ENCODE measurements at regions of chr11 and their contacts with region 1.

Region 1: DNA sequence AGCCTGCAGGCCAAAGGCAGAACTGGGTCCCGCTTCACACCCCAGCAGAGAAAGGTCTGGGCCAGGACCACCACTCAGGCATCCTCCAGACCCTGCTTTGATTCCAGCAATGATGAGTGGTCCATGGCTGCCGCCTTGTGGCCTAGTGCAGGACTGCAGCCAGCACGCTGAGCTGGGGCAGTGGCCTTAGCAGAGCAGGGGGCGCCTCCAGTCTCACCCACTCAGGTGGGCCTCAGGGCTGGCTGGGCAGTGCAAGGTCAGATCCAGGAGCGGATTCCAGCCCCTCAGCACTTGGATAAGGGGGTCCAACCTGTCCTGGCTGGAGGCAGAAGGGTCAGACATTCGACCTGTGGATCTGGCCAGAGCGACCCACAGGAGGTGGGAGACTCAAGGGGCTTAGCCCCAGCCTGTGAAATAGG is 9.6 kb upstream of the PDE2A start:
- DNase-seq: no peak
- H3K4me3 ChIP-seq: no peak overlapping the region
- H3K27me3 ChIP-seq: no peaks in the 10 kb centered on the region; the same call in 1 of the 2 replicates
- CTCF ChIP-seq: peak; percentile 94

Region 2: GRCh38 chr11:72561856-72562255 is 121.9 kb before region 1 on chr11:
- CTCF ChIA-PET with region 1: no interaction called
- POLR2A ChIA-PET with region 1: no interaction called
- DNase-seq: no peak
- H3K4me3 ChIP-seq: no peak overlapping the region
- H3K27me3 ChIP-seq: peaks cover 4% of the 10 kb centered on the region
- CTCF ChIP-seq: no peak

Region 3: DNA sequence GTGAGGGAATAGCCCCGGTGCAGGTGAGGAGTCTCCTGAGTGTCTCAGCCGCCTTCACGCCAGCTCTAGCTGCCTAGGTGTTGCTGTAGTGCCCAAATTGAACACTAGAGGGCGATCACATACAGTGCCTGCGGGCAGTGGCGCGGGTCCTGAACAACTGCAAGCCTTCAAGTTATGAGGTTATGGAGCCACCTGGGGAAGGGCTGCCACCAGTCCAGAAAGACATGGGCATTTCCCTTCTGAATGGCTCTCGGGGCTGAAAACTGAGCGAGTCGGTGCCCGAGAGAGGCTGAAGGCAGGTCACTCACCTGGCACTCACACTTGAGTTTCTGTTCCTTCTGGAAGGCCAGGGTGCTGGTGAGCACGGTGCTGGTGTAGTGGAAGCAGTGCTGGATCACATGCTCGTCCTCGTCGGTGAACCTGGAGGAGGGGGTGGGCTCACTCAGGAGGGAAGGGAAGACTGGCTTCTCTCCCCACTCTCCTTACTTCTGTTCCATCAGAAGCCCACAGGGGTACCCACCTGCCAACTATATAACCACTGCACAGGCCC is 98.0 kb before region 1 on chr11:
- CTCF ChIA-PET with region 1: interaction called, 57 read pairs
- POLR2A ChIA-PET with region 1: no interaction called
- DNase-seq: no peak
- H3K4me3 ChIP-seq: no peak overlapping the region
- H3K27me3 ChIP-seq: peaks cover 45% of the 10 kb centered on the region
- CTCF ChIP-seq: peak; percentile 87

Region 4: GRCh38 chr11:72598906-72599305 is 84.9 kb before region 1 on chr11:
- CTCF ChIA-PET with region 1: interaction called, 14 read pairs
- POLR2A ChIA-PET with region 1: no interaction called
- DNase-seq: no peak
- H3K4me3 ChIP-seq: no peak overlapping the region
- H3K27me3 ChIP-seq: peaks cover 28% of the 10 kb centered on the region
- CTCF ChIP-seq: peak; percentile 54

Region 5: DNA sequence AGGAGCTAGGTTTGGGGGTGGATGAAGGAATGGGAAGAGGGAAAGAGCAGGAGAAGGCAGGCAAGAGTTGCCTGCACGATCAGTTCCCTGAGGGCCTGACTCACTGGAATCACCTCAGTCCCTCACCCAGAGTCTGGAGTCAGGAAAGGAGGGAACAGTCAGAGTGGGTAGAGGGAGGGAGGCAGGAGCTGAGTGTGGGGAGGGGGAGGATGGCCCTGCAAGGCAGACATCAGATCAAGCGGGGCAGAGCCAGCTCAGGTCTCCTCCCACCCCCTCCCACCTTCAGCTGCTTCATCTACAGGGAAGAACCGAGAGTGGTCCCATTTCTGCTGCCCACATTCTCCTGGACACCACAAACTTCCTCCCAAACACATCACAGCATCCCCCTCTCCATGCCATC is 68.5 kb before region 1 on chr11:
- CTCF ChIA-PET with region 1: no interaction called
- POLR2A ChIA-PET with region 1: no interaction called
- DNase-seq: no peak
- H3K4me3 ChIP-seq: no peak overlapping the region
- H3K27me3 ChIP-seq: peaks cover 17% of the 10 kb centered on the region
- CTCF ChIP-seq: no peak

Region 6: DNA sequence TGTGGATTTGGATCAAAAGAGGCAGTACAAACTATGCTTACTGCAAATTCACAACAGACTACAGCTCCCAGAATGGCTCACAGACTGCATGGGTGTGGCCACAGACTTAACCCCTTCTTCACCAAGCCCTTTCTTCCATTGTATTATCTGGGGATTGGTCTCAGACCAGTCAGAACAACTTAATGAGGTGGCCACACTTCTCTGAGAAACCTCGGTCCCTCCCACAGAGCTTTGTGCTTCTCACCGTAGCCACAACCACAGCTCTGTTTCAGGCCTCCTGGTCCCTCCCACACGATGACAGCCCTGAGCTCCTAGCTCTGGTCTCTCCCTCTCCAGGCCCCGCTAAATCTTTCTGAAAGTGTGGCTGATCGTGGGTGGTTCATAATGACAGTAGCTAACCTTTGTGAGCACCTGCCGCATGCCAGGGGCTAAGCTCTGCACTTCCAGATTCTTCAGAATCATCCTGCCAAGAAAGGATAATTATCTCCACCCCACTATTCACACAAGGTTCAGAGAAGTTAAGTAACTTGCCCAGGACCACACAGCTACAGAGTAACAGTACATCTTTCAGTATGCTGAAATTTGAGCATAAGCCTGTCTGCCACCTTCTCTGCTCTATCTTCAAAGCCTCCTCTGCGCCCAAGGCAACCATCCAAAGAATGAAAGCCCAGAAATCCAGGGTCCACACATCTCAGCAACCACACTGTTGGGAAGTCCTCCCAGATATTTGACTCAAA is 15.0 kb before region 1 on chr11:
- CTCF ChIA-PET with region 1: interaction called, 18 read pairs
- POLR2A ChIA-PET with region 1: no interaction called
- DNase-seq: no peak
- H3K4me3 ChIP-seq: no peak overlapping the region
- H3K27me3 ChIP-seq: peaks cover 34% of the 10 kb centered on the region
- CTCF ChIP-seq: no peak

Region 7: GRCh38 chr11:72696866-72697700 is 13.3 kb after region 1 on chr11:
- CTCF ChIA-PET with region 1: interaction called, 43 read pairs
- POLR2A ChIA-PET with region 1: no interaction called
- DNase-seq: no peak
- H3K4me3 ChIP-seq: no peak overlapping the region
- H3K27me3 ChIP-seq: no peaks in the 10 kb centered on the region
- CTCF ChIP-seq: no peak

Region 8: DNA sequence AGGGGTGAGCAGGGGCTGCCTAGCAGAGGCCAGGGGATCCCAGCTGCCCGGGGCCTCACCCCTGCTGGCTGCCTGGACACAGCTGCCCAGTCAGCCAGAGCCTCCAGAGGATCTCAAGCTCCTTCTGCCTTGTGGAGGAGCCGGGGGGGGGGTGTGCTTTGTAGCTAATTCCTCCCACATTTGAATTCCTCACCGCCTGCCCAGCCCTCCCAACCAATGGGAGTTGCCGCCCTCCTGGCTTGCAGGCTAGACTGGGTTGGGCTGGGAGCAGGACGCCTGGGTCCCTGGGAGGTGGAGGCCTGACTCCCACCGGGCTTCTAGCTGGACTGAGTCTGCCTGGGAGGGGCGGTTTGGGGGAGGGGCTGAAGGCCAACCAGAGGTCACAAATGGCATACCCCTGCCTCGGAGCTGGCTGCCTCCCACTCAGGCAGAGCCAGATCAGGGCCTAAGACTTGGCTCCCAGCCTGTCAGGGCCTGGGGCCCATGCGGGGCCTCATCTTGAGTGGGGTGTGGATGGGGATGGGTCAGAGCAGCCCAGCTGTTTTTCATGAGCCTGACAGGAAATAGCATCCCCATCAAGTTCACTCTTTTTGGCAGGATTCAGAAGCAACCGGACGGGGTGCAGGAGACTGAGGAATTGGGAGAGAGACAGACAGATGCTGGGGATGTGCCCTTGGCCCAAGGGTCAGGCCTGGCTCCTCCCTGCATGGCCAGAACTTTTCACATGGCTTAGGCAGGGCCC is 19.6 kb after region 1 on chr11:
- CTCF ChIA-PET with region 1: interaction called, 43 read pairs
- POLR2A ChIA-PET with region 1: no interaction called
- DNase-seq: peak; percentile 48
- H3K4me3 ChIP-seq: no peak overlapping the region
- H3K27me3 ChIP-seq: no peaks in the 10 kb centered on the region
- CTCF ChIP-seq: no peak

Region 9: DNA sequence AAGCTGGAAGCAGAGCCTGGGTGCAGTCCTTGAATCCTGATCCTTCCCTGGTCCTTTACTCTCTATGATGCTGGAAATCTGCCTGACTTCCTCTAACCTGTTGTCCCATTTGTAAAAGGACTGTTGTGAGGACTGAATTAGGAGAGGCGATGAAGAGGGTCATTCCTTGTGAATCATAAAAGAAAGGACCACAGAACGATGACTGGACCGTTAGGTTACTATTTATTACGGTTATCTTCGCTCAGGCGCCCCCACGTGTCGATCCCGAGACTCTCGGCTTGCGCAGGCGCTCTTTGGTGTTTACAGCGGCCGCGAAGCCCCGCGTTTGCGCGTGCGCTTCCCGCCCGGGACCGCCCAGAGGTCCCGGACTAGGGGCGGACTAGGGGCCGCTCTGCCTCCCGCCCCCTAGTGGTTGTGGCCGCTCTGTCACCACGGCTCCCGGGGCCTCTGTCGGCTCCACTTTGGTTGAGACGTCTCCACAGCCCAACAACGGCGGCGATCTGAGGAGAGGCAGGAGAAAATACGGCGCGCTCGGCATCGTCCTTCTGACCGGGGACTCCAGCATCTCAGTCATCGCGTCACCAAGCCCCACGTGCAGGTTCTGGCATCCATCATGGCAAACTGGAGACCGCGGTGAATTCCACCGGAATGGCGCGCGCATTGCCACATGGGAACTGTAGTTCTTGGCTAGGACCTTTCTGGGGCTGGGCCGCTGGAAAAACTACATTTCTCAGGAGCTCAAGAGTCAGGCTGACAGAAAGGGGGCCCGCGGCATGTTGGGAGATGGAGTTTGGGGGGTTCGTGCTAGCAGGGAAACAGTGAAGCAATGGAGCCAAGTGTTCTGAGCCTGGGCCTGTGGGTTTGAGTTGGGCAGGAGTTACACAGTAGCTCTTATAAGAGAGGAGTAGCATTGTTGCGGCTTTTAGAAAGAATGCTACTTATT is 109.9 kb after region 1 on chr11 and contains the start of gene STARD10:
- CTCF ChIA-PET with region 1: interaction called, 10 read pairs
- POLR2A ChIA-PET with region 1: no interaction called
- DNase-seq: peak; percentile 64
- H3K4me3 ChIP-seq: peak within 1 kb of the TSS; percentile 68
- H3K27me3 ChIP-seq: no peaks in the 10 kb centered on the region
- CTCF ChIP-seq: peak; percentile 98
- polyA plus RNA-seq, gene STARD10: 25.4 and 37.1 TPM in 2 replicates

Measured in BJ (cell line).